Activated CD4-positive, alpha-beta memory T cell treated with anti-CD3 and anti-CD28 coated beads for 36 hours (primary cell): ENCODE measurements at regions of chr15 and their contacts with region 1.

Region 1: GRCh38 chr15:63288778-63289378 is 11.5 kb downstream of the APH1B start:
- DNase-seq: no peak
- H3K4me3 Mint-ChIP-seq: no peak overlapping the region
- H3K27ac Mint-ChIP-seq: no peak overlapping the region
- H3K4me1 Mint-ChIP-seq: peaks cover 7% of the 10 kb centered on the region
- H3K27me3 Mint-ChIP-seq: no peaks in the 10 kb centered on the region

Region 2: DNA sequence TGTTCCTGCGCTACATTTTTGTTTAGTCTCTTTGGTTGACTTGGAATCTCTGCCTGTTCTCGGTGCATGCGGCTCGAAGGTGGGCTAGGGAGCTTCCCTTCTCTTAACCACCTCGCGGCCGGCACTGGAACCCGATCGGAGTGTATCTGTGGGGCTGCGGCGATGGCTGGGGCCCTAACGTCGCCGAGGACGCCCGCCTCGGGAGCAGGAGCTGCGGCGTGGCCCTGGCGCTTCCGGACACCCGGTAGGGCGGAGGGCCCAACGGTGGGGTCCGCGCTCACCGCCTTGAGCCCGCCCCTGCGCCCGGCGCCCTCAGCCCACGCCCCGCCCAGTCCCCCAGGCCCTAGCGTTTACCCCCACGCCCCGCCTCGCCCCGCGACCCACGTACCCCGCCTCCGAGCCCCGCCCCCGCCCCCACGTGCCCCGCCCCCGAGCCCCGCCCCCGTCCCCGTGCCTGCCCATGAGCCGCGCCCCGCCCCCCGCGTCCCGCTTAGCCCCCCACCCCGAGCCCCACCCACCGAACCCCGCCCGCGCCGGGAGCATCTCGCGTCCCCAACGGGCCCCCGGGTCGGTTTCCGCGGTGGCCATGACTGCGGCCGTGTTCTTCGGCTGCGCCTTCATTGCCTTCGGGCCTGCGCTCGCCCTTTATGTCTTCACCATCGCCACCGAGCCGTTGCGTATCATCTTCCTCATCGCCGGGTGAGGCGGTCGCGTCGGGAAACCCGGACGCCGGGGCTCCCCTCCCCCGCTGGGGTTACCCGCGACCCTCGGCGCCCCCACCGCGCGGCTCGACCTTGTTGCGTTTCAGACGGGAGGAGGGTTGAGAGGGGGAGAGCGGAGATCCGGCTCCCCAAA is 11.6 kb before region 1 on chr15 and contains the start of gene APH1B:
- CTCF ChIA-PET with region 1: interaction called, 12 read pairs
- POLR2A ChIA-PET with region 1: no interaction called
- intact Hi-C with region 1: no loop called
- DNase-seq: peak; percentile 80
- H3K4me3 Mint-ChIP-seq: peak within 1 kb of the TSS; percentile 80
- H3K27ac Mint-ChIP-seq: peak within 1 kb of the TSS; percentile 59
- H3K4me1 Mint-ChIP-seq: peaks cover 20% of the 10 kb centered on the region
- H3K27me3 Mint-ChIP-seq: no peaks in the 10 kb centered on the region
- total RNA-seq, gene APH1B: 6.6 to 7.0 TPM

Region 3: DNA sequence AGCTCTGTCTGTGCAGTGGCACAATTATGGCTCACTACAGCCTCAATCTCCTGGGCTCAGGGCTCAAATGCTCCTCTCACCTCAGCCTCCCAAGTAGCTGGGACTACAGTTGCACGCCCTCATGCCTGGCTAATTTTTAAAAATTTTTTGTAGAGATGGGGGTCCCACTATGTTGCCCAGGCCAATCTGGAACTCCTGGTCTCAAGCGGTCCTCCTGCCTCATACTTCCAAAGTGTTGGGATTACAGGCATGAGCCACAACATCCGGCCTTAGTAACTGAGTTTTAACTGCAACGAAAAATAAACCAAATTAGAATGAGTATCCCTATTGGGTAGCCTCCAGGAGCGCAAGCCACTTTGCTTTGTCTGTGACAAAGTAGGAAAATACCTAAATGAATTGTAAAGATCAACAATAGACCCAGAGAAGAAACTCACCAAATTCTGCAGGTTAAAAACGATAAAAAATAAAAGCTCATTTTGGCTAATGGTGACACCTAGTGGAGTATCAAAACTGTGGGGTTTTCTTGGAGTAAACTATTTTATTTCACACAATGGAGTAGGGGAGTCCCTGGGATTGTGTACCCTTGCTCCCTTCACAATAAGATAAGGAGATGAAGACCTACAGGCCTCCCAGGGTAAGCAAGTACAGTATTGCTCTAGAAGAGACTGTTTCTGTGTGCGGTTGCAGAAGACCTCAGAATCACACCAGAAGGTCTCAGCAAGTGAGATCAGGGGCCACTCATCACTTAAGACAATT is 113.8 kb after region 1 on chr15:
- CTCF ChIA-PET with region 1: interaction called, 47 read pairs
- POLR2A ChIA-PET with region 1: no interaction called
- intact Hi-C with region 1: loop called (anchors 1 kb)
- DNase-seq: no peak
- H3K4me3 Mint-ChIP-seq: no peak overlapping the region
- H3K27ac Mint-ChIP-seq: no peak overlapping the region
- H3K4me1 Mint-ChIP-seq: peaks cover 3% of the 10 kb centered on the region
- H3K27me3 Mint-ChIP-seq: peaks cover 12% of the 10 kb centered on the region

Region 4: GRCh38 chr15:64067564-64068030 is 778.7 kb after region 1 on chr15:
- CTCF ChIA-PET with region 1: no interaction called
- POLR2A ChIA-PET with region 1: no interaction called
- intact Hi-C with region 1: loop called (anchors 10 kb)
- DNase-seq: peak; percentile 73
- H3K4me3 Mint-ChIP-seq: no peak overlapping the region
- H3K27ac Mint-ChIP-seq: peak overlapping the region; percentile 38
- H3K4me1 Mint-ChIP-seq: peaks cover 4% of the 10 kb centered on the region
- H3K27me3 Mint-ChIP-seq: no peaks in the 10 kb centered on the region